ENCODE measurements at regions of chr6 and their contacts with region 1.

Region 1: DNA sequence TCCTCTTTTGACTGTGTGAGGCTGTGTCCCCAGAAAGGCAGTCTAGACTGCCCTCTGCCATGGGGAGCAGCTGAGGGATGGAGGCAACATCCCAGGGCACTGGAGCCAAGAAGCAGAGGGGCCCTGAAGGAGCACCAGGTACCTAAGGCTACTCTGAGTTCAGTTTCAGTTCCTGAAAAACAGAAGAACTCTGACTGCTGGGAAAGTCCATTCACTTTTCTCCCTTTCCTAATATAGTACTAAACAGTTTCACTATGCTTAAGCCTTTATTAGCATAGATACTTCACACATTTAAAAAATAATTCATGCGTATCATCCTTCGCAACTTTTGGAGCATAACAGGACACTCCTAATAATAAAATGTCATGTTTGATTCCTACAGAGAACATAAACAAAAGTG is 130.0 kb downstream of the FOXC1 start:
- DNase-seq: peak; percentile 77
- ATAC-seq: peak; percentile 71
- H3K4me3 ChIP-seq: no peak overlapping the region
- H3K4me3 Mint-ChIP-seq: peak overlapping the region; percentile 20
- H3K27ac ChIP-seq: no peak overlapping the region
- H3K27ac Mint-ChIP-seq: no peak overlapping the region
- H3K4me1 ChIP-seq: peaks cover 22 to 26% of the 10 kb centered on the region in 2 donors
- H3K4me1 Mint-ChIP-seq: peaks cover 4% of the 10 kb centered on the region
- H3K27me3 ChIP-seq: no peaks in the 10 kb centered on the region
- H3K27me3 Mint-ChIP-seq: no peaks in the 10 kb centered on the region
- CTCF ChIP-seq: no peak

Region 2: DNA sequence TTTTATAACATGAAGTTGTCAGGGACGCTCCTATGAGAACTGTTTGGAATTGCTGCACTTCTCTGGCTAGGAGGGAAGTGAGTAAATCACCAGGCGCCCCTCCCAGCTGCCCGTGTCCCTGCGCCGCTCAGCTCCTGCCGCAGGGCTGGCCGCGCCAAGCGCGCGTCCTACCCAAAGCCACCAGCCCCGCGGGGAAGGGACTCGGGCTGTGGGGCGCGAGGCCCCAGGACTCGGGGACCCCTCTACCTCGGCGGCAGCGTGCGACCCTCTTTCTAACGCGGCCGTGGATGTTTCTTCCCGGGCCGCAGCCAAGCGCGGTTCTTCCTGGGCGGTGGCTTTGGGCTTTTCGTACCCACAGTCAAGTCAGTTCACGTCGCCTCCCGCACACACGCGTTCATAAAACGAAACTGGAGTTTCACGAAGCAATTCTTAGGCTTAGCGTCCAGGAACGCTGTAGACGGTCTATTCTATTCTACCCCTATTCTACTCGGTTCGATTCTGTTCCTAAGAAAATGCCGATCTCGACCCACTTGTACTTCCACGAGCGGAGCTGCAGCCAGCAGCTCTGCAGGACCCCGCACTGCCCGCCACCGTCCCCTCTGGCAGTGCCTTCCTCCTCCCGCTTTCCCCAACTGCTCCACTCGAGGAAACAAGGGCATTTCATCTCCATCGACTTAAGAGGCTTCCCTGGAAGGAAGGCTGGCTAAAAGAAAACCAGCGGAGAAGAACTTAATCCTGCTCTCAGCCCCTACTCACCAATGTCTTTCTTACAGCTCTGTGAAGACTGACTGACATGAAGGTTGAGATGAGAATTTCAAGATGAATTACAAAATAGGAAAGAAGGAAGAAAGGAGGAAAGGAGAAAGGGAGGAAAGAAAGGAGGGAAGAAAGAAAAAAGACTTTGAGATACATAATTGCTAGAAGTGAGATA is 114.6 kb before region 1 on chr6:
- CTCF ChIA-PET with region 1: no interaction called
- POLR2A ChIA-PET with region 1: no interaction called
- intact Hi-C with region 1: loop called (anchors 10 kb)
- DNase-seq: peak; percentile 59
- ATAC-seq: peak; percentile 34
- H3K4me3 ChIP-seq: peak overlapping the region; percentile 28 to 69 (median 37)
- H3K4me3 Mint-ChIP-seq: peak overlapping the region; percentile 88
- H3K27ac ChIP-seq: no peak overlapping the region
- H3K27ac Mint-ChIP-seq: no peak overlapping the region
- H3K4me1 ChIP-seq: peaks cover 28 to 32% of the 10 kb centered on the region in 2 donors
- H3K4me1 Mint-ChIP-seq: peaks cover 18% of the 10 kb centered on the region
- H3K27me3 ChIP-seq: peaks cover 0 to 80% (median 57%) of the 10 kb centered on the region in 4 experiments
- H3K27me3 Mint-ChIP-seq: peaks cover 65% of the 10 kb centered on the region
- CTCF ChIP-seq: no peak

Region 3: GRCh38 chr6:1709234-1709641 is 30.4 kb before region 1 on chr6:
- CTCF ChIA-PET with region 1: no interaction called
- POLR2A ChIA-PET with region 1: interaction called, 13 read pairs
- intact Hi-C with region 1: no loop called
- DNase-seq: no peak
- ATAC-seq: no peak
- H3K4me3 ChIP-seq: no peak overlapping the region
- H3K4me3 Mint-ChIP-seq: no peak overlapping the region
- H3K27ac ChIP-seq: no peak overlapping the region
- H3K27ac Mint-ChIP-seq: no peak overlapping the region
- H3K4me1 ChIP-seq: no peaks in the 10 kb centered on the region
- H3K4me1 Mint-ChIP-seq: no peaks in the 10 kb centered on the region
- H3K27me3 ChIP-seq: no peaks in the 10 kb centered on the region
- H3K27me3 Mint-ChIP-seq: no peaks in the 10 kb centered on the region
- CTCF ChIP-seq: no peak

Measured in B cell (primary cell).